ENCODE measurements at regions of chr17 and their contacts with region 1.

Region 1: GRCh38 chr17:46995841-46996571 is 17.0 kb upstream of the RPRML start:
- DNase-seq: no peak
- H3K4me3 ChIP-seq: no peak overlapping the region
- H3K27ac ChIP-seq: no peak overlapping the region
- H3K4me1 ChIP-seq: peaks cover 0 to 7% of the 10 kb centered on the region in 2 donors
- H3K27me3 ChIP-seq: no peaks in the 10 kb centered on the region
- CTCF ChIP-seq: no peak
- POLR2A ChIP-seq: no peak

Region 2: GRCh38 chr17:46940621-46941404 is 55.2 kb before region 1 on chr17:
- intact Hi-C with region 1: loop called (anchors 5 kb)
- DNase-seq: peak; percentile 65 to 66
- H3K4me3 ChIP-seq: no peak overlapping the region
- H3K27ac ChIP-seq: no peak overlapping the region
- H3K4me1 ChIP-seq: peaks cover 6 to 10% of the 10 kb centered on the region in 2 donors
- H3K27me3 ChIP-seq: no peaks in the 10 kb centered on the region
- CTCF ChIP-seq: peak; percentile 35 to 76 (median 58)
- POLR2A ChIP-seq: no peak

Measured in thyroid gland (tissue), 4 donors.